Activated B cell treated with CpG ODN at 0.5 μM for 24 hours (primary cell): ENCODE measurements at regions of chr12 and their contacts with region 1.

Region 1: GRCh38 chr12:53379389-53380103 is 430 bp upstream of the SP1 start:
- DNase-seq: peak; percentile 70
- ATAC-seq: peak; percentile 72
- H3K4me3 Mint-ChIP-seq: no peak overlapping the region
- H3K27ac Mint-ChIP-seq: no peak overlapping the region
- H3K4me1 Mint-ChIP-seq: peaks cover 37% of the 10 kb centered on the region
- H3K27me3 Mint-ChIP-seq: no peaks in the 10 kb centered on the region
- CTCF ChIP-seq: no peak

Region 2: GRCh38 chr12:53220801-53221202 is 158.7 kb before region 1 on chr12:
- CTCF ChIA-PET with region 1: no interaction called
- POLR2A ChIA-PET with region 1: interaction called, 13 read pairs
- intact Hi-C with region 1: no loop called
- DNase-seq: peak; percentile 74
- ATAC-seq: peak; percentile 77
- H3K4me3 Mint-ChIP-seq: peak overlapping the region; percentile 89
- H3K27ac Mint-ChIP-seq: peak overlapping the region; percentile 96
- H3K4me1 Mint-ChIP-seq: peaks cover 48% of the 10 kb centered on the region
- H3K27me3 Mint-ChIP-seq: no peaks in the 10 kb centered on the region
- CTCF ChIP-seq: no peak

Region 3: DNA sequence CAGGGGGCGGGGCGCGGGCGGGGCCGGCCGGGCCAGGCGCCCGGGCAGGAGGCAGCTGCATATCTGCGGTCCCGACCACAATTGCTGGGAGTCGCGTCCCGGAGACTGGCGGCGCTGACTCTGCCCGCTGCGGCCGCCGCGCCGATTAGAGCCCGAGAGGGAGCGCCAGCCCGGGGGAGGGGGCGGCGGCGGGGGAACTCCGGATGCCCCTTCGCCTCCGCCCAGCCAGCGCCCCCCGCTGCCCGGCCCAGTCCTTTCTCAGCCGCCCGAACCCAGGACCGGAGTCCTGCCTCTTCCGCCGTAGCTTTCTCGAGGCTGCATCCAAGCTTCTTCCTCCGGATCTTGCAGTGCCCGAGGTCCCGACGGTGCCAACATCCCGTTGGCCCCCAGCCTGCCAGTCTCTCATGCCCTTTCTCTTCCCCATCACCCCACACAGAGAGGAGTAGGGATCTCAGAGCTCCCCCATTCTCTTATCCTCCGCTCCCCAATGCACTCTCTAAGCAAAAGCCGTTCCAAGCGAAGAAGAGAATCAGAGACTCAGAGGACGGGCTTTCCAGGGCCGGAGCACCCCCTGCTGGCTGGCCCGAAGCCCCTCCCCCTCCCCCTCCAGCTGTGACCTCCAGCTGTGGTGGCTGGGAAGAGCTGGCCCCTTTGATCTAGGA is 34.6 kb before region 1 on chr12:
- CTCF ChIA-PET with region 1: interaction called, 10 read pairs
- POLR2A ChIA-PET with region 1: interaction called, 12 read pairs
- intact Hi-C with region 1: no loop called
- DNase-seq: peak; percentile 61
- ATAC-seq: peak; percentile 90
- H3K4me3 Mint-ChIP-seq: peak overlapping the region; percentile 93
- H3K27ac Mint-ChIP-seq: peak overlapping the region; percentile 67
- H3K4me1 Mint-ChIP-seq: peaks cover 15% of the 10 kb centered on the region
- H3K27me3 Mint-ChIP-seq: peaks cover 6% of the 10 kb centered on the region
- CTCF ChIP-seq: no peak

Region 4: DNA sequence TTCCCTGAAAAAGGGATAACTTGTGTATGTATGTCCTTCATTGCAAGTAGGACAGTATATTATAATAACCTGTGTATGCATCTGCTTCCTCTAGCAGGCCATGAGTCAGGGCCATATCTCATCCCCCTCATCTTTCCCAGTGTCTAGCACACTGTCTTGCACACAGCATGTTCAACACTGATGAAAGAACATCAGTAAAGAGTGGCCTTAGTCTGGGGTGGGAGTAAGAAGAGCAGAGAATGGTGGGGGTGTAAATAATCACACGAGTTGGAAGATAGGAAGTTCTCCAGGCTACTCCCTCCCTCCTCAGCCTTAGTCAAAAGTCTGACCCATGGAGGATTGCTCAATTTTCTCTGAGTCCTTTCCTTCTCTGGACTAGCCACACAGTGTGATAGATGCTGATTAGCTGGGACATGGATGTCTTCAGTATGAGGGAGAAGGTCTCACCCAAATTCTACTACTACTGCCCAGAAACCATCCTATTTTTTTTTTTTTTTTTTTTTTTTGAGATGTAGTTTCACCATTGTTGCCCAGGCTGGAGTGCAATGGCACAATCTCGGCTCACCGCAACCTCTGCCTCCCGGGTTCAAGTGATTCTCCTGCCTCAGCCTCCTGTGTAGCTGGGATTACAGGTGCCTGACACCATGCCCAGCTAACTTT is 14.2 kb before region 1 on chr12:
- CTCF ChIA-PET with region 1: interaction called, 4 read pairs
- POLR2A ChIA-PET with region 1: interaction called, 19 read pairs
- intact Hi-C with region 1: loop called (anchors 2 kb)
- DNase-seq: no peak
- ATAC-seq: no peak
- H3K4me3 Mint-ChIP-seq: peak overlapping the region; percentile 77
- H3K27ac Mint-ChIP-seq: peak overlapping the region; percentile 90
- H3K4me1 Mint-ChIP-seq: peaks cover 12% of the 10 kb centered on the region
- H3K27me3 Mint-ChIP-seq: no peaks in the 10 kb centered on the region
- CTCF ChIP-seq: no peak

Region 5: DNA sequence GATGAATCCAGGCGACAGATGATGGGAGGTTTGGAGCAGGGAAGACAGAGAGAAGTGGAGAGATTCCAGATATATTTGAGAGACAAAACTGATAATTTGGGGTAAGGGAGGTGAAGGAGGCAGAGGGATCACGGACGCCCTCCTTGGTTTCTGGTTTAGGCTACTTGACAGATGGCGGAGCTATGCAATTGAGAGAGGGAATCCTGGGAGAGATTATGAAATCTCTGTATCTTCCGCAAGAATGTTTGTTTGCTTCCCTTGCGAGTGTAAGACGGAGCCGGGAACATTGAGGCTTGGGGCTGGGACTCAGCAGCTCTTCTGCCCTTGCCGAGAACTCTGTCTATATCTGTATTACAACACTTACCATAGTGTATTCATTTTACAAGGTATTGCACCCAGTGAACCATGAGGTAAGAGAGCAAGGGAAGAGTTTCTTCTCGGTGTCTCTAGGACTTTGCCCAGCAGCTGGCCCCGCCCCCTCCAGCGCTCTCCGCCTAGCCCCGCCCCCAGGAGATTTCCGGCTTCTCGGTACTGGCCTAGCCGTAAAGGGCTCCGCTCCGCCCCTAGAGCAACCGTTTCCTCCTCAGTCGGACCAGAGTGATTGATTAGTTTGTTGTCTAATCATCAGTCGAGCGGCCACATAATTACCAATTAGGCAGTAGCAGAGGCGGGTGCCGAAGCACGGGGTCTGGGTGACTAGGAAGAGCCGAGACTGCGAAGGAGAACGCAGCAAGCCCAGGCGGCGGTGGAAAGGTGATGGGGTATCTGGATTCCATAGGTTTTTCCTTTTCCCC is 61.7 kb after region 1 on chr12 and contains the start of gene PRR13:
- CTCF ChIA-PET with region 1: no interaction called
- POLR2A ChIA-PET with region 1: interaction called, 14 read pairs
- intact Hi-C with region 1: loop called (anchors 1 kb)
- DNase-seq: peak; percentile 88
- ATAC-seq: peak; percentile 98
- H3K4me3 Mint-ChIP-seq: peak within 1 kb of the TSS; percentile 93
- H3K27ac Mint-ChIP-seq: peak within 1 kb of the TSS; percentile 93
- H3K4me1 Mint-ChIP-seq: peaks cover 40% of the 10 kb centered on the region
- H3K27me3 Mint-ChIP-seq: no peaks in the 10 kb centered on the region
- CTCF ChIP-seq: no peak
- total RNA-seq, gene PRR13: 266 and 288 TPM in 2 replicates

Region 6: DNA sequence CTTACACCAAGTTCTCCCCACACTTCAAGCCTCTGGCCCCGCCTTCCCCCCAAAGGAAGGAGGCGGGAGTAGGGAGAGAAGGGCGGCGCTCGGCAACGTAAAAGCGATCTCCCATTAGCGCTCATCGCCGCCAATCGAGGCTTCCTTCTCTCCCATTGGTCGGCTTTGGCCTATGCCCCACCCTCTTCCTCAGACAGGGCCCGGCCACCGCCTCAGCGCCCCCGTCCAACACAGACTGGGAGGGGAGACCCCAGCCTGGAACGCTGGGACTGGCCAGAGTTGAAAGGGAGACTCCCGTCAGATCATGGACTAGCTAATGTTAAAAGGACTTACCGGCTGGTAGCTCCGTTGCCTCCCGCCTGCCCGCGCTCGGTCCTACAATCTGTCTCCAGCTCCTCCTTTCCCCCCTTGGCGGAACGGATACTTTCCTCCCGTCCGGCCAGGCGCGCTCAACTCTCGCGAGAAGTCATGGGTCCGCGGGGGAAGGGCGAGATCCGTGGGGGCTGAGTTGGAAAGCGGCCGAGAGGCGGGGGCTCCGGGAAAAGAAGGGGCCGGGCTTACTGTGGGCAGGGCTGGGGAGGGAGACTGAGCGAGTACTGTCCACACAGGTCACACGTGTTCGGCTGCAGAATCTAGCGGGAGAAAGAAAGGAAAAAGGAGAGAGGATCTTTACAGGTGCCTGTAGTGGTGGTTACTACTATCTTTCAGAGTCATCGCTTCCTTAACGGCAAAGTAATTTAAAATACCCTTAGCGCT is 246.6 kb after region 1 on chr12 and contains the start of gene ATF7:
- CTCF ChIA-PET with region 1: no interaction called
- POLR2A ChIA-PET with region 1: interaction called, 4 read pairs
- intact Hi-C with region 1: loop called (anchors 1 kb)
- DNase-seq: peak; percentile 98
- ATAC-seq: peak; percentile 91
- H3K4me3 Mint-ChIP-seq: peak within 1 kb of the TSS; percentile 98
- H3K27ac Mint-ChIP-seq: peak within 1 kb of the TSS; percentile 99
- H3K4me1 Mint-ChIP-seq: peaks cover 43% of the 10 kb centered on the region
- H3K27me3 Mint-ChIP-seq: no peaks in the 10 kb centered on the region
- CTCF ChIP-seq: no peak
- total RNA-seq, gene ATF7: 29.5 and 36.8 TPM in 2 replicates